Right ventricle myocardium inferior (tissue), 1 donor: ENCODE measurements at regions of chr11 and their contacts with region 1.

Region 1: GRCh38 chr11:117554601-117555333 is 227.1 kb downstream of the CEP164 start:
- DNase-seq: no peak
- ATAC-seq: no peak

Region 2: GRCh38 chr11:117459781-117460261 is 94.9 kb before region 1 on chr11:
- intact Hi-C with region 1: loop called (anchors 5 kb)
- DNase-seq: no peak
- ATAC-seq: no peak

Region 3: GRCh38 chr11:117657794-117658193 is 103.0 kb after region 1 on chr11:
- intact Hi-C with region 1: no loop called
- DNase-seq: no peak
- ATAC-seq: peak; percentile 79

Region 4: DNA sequence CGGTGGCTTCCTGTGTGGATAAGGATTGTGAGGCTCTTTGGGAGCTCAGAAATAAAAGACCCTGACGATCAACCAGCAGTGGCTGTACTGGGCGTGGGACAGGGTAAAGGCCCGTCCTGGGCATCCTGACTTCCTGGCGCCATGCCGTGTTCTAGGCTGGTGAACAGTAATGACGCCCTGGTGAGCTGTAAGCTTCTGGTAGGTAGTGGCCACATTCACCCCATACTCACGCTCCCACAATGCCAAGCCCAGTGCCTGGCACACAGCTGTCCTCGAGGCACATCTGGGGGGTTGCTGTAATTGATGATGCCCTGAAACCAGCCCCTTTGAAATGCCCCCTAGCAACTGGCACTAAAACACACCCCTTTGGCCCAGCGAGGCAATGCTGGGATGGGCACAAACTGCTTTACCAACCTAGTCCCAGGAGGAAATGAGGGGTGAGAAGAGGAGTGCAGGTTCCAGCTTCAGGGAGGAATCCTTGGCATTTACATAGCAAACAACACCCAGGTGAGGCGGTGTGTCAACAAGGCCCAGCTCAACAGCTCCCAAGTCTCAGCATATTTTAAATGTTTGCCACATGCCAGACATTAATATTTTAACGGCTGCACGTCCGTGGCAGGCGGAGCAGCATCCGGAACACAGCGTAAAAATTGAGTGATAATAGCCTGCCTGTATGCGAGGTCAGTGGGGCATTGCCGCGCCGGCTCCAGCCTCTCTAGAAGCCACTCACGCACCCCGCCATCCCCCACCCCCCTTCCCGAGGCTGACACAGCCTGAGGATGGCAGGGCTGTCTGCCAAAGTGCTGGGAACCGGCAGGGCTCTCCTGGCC is 162.9 kb after region 1 on chr11:
- intact Hi-C with region 1: no loop called
- DNase-seq: no peak
- ATAC-seq: peak; percentile 23